ENCODE measurements at regions of chr2 and their contacts with region 1.

Region 1: GRCh38 chr2:238370823-238371372 is 50.6 kb downstream of the TRAF3IP1 start:
- DNase-seq: peak; percentile 36
- ATAC-seq: peak; percentile 93
- H3K4me3 ChIP-seq: no peak overlapping the region
- H3K27ac ChIP-seq: no peak overlapping the region
- H3K4me1 ChIP-seq: no peaks in the 10 kb centered on the region
- H3K27me3 ChIP-seq: no peaks in the 10 kb centered on the region
- CTCF ChIP-seq: peak; percentile 76 to 88 (median 82)
- POLR2A ChIP-seq: no peak
- RAD21 ChIP-seq: peak; percentile 96

Region 2: DNA sequence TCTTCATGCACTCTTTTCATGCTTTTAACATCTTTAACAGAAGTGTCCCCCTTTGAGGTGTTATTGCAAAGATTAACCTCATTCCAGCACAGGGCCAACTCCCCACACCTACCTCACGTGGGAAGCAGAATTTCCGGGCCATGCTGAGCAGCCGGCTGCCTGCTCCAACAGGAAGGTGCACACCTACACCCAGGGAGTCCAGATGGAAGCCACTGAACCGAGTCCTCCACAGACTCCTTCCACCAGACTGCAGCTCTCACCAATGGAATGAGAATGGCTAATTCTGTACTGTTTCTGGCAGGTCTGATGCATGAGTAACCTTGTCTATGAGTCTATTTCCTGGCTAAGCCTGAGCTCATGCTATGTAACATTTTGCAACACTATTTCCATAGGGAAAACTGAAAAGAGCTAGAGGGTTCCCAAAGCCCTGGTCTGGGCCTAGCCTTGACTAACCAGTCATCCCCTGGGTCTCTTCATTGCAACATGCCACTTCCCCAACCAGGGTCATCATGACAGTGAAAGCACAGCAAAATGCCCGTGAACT is 201.1 kb before region 1 on chr2:
- CTCF ChIA-PET with region 1: no interaction called
- POLR2A ChIA-PET with region 1: no interaction called
- RAD21 ChIA-PET with region 1: no interaction called
- intact Hi-C with region 1: no loop called
- DNase-seq: no peak
- ATAC-seq: no peak
- H3K4me3 ChIP-seq: no peak overlapping the region
- H3K27ac ChIP-seq: peak overlapping the region; percentile 24; the same call in 1 of the 2 replicates
- H3K4me1 ChIP-seq: 0 out of 4 replicates have a peak, but pooled peaks cover 0 to 2% of the 10 kb centered on the region in 2 experiments
- H3K27me3 ChIP-seq: no peaks in the 10 kb centered on the region
- CTCF ChIP-seq: no peak
- POLR2A ChIP-seq: no peak
- RAD21 ChIP-seq: no peak

Region 3: DNA sequence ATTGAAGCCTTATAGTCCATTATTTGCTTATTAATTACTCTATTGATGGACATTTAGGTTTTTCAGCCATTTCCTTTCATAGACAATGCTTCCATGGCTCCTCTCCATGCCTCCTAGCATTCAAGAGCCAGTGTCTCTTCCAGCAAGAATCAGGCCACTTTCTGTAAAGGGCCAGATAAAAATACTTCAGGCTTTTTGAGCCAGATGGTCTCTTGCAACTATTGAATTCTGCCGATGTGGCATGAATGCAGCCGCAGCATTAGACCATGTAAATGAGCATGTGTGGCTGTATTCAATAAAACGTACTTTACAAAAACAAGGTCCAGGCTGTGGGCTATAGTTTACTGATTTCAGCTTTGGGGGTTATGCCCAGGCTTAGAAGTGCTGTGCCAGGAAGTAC is 12.1 kb before region 1 on chr2:
- CTCF ChIA-PET with region 1: interaction called, 22 read pairs
- POLR2A ChIA-PET with region 1: no interaction called
- RAD21 ChIA-PET with region 1: no interaction called
- intact Hi-C with region 1: no loop called
- DNase-seq: no peak
- ATAC-seq: no peak
- H3K4me3 ChIP-seq: no peak overlapping the region
- H3K27ac ChIP-seq: no peak overlapping the region
- H3K4me1 ChIP-seq: peaks cover 5 to 8% of the 10 kb centered on the region in 2 experiments; a peak in 3 of 4 replicates
- H3K27me3 ChIP-seq: no peaks in the 10 kb centered on the region
- CTCF ChIP-seq: no peak
- POLR2A ChIP-seq: no peak
- RAD21 ChIP-seq: no peak

Region 4: DNA sequence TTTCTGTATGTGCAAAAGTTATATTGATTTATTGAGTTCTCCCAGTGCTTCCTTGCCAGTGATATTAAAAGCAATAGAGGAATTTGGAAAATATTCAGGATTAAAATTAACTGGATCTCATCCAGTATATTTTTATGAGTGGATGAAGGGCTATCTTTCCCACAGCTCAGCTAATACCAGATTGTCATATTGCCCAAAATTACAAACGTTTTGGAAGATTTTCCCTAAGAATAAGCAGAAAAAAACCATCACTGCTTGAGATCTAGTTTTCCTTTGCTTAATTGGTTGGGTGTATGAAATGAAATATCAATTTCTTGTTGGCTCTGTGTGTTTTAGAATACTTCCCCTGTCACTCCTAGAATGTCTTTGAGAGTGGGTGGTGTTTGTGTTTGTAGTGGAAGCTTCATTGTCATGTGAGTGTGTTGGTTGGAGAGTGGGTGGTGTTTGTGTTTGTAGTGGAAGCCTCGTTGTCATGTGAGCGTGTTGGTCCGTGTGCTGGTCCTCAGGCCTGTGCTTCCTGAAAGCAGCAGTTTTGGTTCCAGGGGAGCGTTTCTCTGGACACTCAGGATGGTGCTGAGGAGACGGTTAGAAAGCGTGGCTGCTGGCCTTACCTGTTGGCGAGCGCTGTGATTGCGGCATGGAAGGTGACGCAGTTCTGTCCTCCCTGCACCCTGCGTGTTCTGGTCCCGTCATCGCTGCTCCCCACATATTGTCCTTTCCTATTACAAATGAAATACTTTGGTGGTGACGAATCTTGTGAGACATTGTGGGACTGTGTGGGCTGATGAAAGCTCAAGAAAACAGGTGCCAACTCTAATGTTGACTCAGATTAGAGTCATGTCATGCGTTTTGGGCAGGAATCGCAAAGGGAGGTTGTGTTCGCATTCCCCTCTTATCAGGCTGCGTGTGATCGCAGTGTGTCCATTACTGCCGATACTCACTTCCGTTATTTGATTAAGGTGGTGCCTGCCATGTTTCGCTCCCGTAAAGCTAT is 68.3 kb after region 1 on chr2:
- CTCF ChIA-PET with region 1: interaction called, 3 read pairs
- POLR2A ChIA-PET with region 1: no interaction called
- RAD21 ChIA-PET with region 1: no interaction called
- intact Hi-C with region 1: loop called (anchors 1 kb)
- DNase-seq: peak; percentile 97
- ATAC-seq: peak; percentile 90
- H3K4me3 ChIP-seq: peak overlapping the region; percentile 34 to 39
- H3K27ac ChIP-seq: peak overlapping the region; percentile 60
- H3K4me1 ChIP-seq: peaks cover 21 to 48% of the 10 kb centered on the region in 2 experiments
- H3K27me3 ChIP-seq: no peaks in the 10 kb centered on the region
- CTCF ChIP-seq: no peak
- POLR2A ChIP-seq: no peak
- RAD21 ChIP-seq: 0 out of 2 replicates have a peak, but pooled peaks have one; percentile 9

Region 5: DNA sequence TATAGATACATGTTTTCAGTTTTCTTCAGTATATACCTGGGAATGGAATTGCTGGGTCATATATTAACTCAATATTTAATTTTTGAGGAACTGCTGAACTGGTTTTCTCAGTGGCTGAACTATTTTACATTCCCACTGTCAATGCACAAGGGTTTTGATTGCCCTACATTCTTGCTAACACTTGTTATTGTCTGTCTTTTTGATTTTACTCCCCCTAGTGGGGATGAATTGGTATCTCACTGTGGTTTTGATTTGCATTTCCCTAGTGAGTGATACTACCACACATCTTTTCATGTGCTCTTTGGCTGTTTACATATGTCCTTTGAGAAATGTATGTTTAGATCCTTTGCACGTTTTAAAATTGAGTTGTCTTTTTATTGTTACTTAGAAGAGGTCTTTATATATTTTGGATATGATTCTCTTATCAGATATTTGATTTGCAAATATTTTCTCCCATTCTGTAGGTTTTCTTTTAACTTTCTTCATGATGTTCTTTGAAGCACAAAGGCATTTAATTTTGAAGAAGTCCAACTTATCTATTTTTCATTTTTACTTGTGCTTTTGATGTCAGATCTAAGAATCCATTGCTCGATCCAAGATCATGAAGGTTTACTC is 92.0 kb after region 1 on chr2:
- CTCF ChIA-PET with region 1: interaction called, 10 read pairs
- POLR2A ChIA-PET with region 1: no interaction called
- RAD21 ChIA-PET with region 1: no interaction called
- intact Hi-C with region 1: loop called (anchors 1 kb)
- DNase-seq: peak; percentile 40
- ATAC-seq: peak; percentile 88
- H3K4me3 ChIP-seq: no peak overlapping the region
- H3K27ac ChIP-seq: no peak overlapping the region
- H3K4me1 ChIP-seq: no peaks in the 10 kb centered on the region
- H3K27me3 ChIP-seq: no peaks in the 10 kb centered on the region
- CTCF ChIP-seq: peak; percentile 62 to 86 (median 76); a peak in 5 of 6 replicates
- POLR2A ChIP-seq: no peak
- RAD21 ChIP-seq: peak; percentile 79

Region 6: GRCh38 chr2:238784671-238785527 is 414.0 kb after region 1 on chr2:
- CTCF ChIA-PET with region 1: interaction called, 13 read pairs
- POLR2A ChIA-PET with region 1: no interaction called
- RAD21 ChIA-PET with region 1: no interaction called
- intact Hi-C with region 1: loop called (anchors 2 kb)
- DNase-seq: peak; percentile 49
- ATAC-seq: peak; percentile 95
- H3K4me3 ChIP-seq: no peak overlapping the region
- H3K27ac ChIP-seq: no peak overlapping the region
- H3K4me1 ChIP-seq: peaks cover 0 to 7% of the 10 kb centered on the region in 2 experiments; a peak in 1 of 4 replicates
- H3K27me3 ChIP-seq: no peaks in the 10 kb centered on the region
- CTCF ChIP-seq: peak; percentile 86 to 94 (median 86)
- POLR2A ChIP-seq: no peak
- RAD21 ChIP-seq: peak; percentile 92

Region 7: GRCh38 chr2:238970553-238971081 is 599.7 kb after region 1 on chr2:
- CTCF ChIA-PET with region 1: no interaction called
- POLR2A ChIA-PET with region 1: no interaction called
- RAD21 ChIA-PET with region 1: no interaction called
- intact Hi-C with region 1: loop called (anchors 2 kb)
- DNase-seq: peak; percentile 33
- ATAC-seq: peak; percentile 93
- H3K4me3 ChIP-seq: no peak overlapping the region
- H3K27ac ChIP-seq: no peak overlapping the region
- H3K4me1 ChIP-seq: peaks cover 0 to 15% of the 10 kb centered on the region in 2 experiments; a peak in 2 of 4 replicates
- H3K27me3 ChIP-seq: no peaks in the 10 kb centered on the region
- CTCF ChIP-seq: peak; percentile 84 to 99 (median 98)
- POLR2A ChIP-seq: no peak
- RAD21 ChIP-seq: peak; percentile 93

Measured in HCT116 (cell line).